Right cardiac atrium (tissue), 5 donors: ENCODE measurements at regions of chr6 and their contacts with region 1.

Region 1: GRCh38 chr6:129498950-129499842 is 210.8 kb downstream of the ARHGAP18 start:
- DNase-seq: no peak
- ATAC-seq: peak; percentile 20 to 50
- H3K4me3 ChIP-seq: no peak overlapping the region
- H3K27ac ChIP-seq: no peak overlapping the region
- H3K4me1 ChIP-seq: peaks cover 9% of the 10 kb centered on the region
- H3K27me3 ChIP-seq: no peaks in the 10 kb centered on the region

Region 2: DNA sequence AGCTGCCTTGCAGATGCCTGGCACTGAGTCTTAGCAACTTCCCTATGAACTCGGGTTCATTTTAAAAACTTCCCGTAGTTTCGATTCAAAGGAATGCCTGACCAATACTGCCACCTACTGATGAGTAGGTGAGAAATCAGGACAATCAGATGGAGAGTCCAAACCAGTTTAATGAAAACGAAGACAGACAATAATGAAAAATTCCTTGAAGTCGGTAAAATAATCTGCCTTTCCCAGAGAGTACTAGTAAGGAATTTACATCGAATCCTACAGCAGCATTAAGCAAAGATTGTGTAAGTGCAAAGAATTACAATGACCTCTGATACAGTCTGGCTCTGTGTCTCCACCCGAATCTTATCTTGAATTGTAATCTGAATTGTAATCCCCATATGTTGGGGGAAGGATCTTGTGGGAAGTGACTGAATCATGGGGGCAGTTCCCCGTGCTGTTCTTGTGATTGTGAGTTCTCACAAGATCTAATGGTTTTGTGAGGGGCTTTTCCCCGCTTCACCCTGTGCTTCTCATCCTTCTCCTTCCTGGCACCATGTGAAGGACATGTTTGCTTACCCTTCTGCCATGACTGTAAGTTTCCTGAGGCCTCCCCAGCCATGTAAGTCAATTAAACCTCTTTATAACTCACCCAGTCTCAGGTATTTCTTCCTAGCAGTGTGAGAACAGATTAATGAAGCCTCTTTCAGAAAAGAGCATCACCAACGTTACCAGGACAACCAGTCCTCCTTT is 76.4 kb after region 1 on chr6:
- intact Hi-C with region 1: loop called in 2 of 4 experiments (anchors 2 to 5 kb)
- DNase-seq: peak in 1 of 3 donors; percentile 43
- ATAC-seq: peak; percentile 74 to 75
- H3K4me3 ChIP-seq: peak overlapping the region; percentile 51
- H3K27ac ChIP-seq: no peak overlapping the region
- H3K4me1 ChIP-seq: no peaks in the 10 kb centered on the region
- H3K27me3 ChIP-seq: no peaks in the 10 kb centered on the region

Region 3: GRCh38 chr6:129835691-129836090 is 336.5 kb after region 1 on chr6:
- intact Hi-C with region 1: no loop called
- DNase-seq: no peak
- ATAC-seq: no peak
- H3K4me3 ChIP-seq: no peak overlapping the region
- H3K27ac ChIP-seq: no peak overlapping the region
- H3K4me1 ChIP-seq: no peaks in the 10 kb centered on the region
- H3K27me3 ChIP-seq: no peaks in the 10 kb centered on the region